Motor neuron (in vitro differentiated cells): ENCODE measurements at regions of chr18 and their contacts with region 1.

Region 1: DNA sequence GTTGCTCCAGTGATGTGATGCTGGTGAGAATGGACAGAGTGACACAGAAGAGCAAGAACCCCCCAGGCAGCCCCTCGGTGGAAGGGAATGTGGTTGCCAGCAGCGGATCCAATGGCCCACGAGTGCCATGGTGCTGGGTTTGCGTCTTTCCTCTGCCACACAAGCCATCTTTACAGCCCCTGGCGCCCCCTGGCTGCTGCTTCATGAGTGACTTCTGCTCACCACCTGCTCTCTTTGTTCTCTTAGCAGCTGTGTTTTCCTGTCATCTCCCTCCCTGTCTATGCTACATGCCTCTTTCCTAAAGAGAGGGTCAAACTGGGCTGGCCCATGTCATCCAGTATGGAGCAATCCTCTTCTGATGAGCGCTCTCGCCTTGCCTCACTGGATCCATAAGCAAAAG is 300.0 kb upstream of the SMIM21 start:
- ATAC-seq: peak in 7 of 8 experiments; percentile 21 to 81 (median 71)
- H3K4me3 ChIP-seq: no peak overlapping the region
- H3K27ac ChIP-seq: no peak overlapping the region
- H3K4me1 ChIP-seq: peaks cover 6 to 16% of the 10 kb centered on the region in 2 donors

Region 2: GRCh38 chr18:75478996-75479880 is 248.2 kb before region 1 on chr18:
- in situ Hi-C with region 1: loop called in 1 of 9 experiments (anchors 25 kb)
- ATAC-seq: peak; percentile 63 to 87 (median 80)
- H3K4me3 ChIP-seq: no peak overlapping the region
- H3K27ac ChIP-seq: no peak overlapping the region
- H3K4me1 ChIP-seq: peaks cover 0 to 20% of the 10 kb centered on the region in 2 donors

Region 3: GRCh38 chr18:75562216-75562615 is 165.2 kb before region 1 on chr18:
- in situ Hi-C with region 1: no loop called
- ATAC-seq: no peak
- H3K4me3 ChIP-seq: no peak overlapping the region
- H3K27ac ChIP-seq: no peak overlapping the region
- H3K4me1 ChIP-seq: peaks cover 0 to 3% of the 10 kb centered on the region in 2 donors